CD4-positive, alpha-beta T cell (primary cell): ENCODE measurements at regions of chr14 and their contacts with region 1.

Region 1: GRCh38 chr14:21233457-21234076 is 35.7 kb downstream of the HNRNPC start:
- DNase-seq: peak in 4 of 14 experiments; percentile 25 to 59 (median 45)
- ATAC-seq: no peak
- H3K4me3 ChIP-seq: no peak overlapping the region
- H3K4me3 Mint-ChIP-seq: peak overlapping the region; percentile 31
- H3K27ac ChIP-seq: peak overlapping the region in 1 of 2 donors; percentile 23
- H3K27ac Mint-ChIP-seq: peak overlapping the region; percentile 93
- H3K4me1 ChIP-seq: peaks cover 45% of the 10 kb centered on the region
- H3K4me1 Mint-ChIP-seq: peaks cover 87% of the 10 kb centered on the region
- H3K27me3 ChIP-seq: no peaks in the 10 kb centered on the region
- H3K27me3 Mint-ChIP-seq: no peaks in the 10 kb centered on the region
- CTCF ChIP-seq: peak; percentile 31

Region 2: DNA sequence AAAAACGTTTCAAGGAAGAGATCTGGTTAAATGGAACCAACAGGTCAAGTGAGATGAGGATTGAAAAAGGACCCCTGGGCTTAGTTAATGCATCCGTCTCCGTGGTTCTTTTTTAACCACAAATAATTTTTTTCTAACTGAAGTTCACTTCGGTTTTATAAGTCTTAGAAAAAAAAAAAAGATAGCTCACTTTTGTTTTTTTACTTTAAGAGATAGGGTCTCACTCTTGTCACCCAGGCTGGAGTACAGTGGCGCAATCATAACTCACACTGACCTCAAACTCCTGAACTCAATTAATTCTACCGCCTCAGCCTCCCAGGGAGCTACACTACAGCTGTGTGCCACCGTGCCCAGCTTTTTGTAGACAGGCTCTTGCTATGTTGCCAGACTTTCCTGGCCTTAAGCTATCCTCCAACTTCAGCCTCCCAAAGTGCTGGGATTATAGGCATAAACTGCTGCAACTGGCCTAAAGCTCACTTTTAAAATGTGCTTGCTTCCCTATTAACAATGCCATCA is 23.9 kb after region 1 on chr14:
- CTCF ChIA-PET with region 1: interaction called, 4 read pairs
- POLR2A ChIA-PET with region 1: interaction called, 17 read pairs
- intact Hi-C with region 1: no loop called
- DNase-seq: no peak
- ATAC-seq: peak; percentile 13
- H3K4me3 ChIP-seq: no peak overlapping the region
- H3K4me3 Mint-ChIP-seq: peak overlapping the region; percentile 81
- H3K27ac ChIP-seq: peak overlapping the region in 1 of 2 donors; percentile 26
- H3K27ac Mint-ChIP-seq: peak overlapping the region; percentile 80
- H3K4me1 ChIP-seq: peaks cover 61% of the 10 kb centered on the region
- H3K4me1 Mint-ChIP-seq: peaks cover 79% of the 10 kb centered on the region
- H3K27me3 ChIP-seq: no peaks in the 10 kb centered on the region
- H3K27me3 Mint-ChIP-seq: no peaks in the 10 kb centered on the region
- CTCF ChIP-seq: no peak